ENCODE measurements at regions of chr3 and their contacts with region 1.

Region 1: DNA sequence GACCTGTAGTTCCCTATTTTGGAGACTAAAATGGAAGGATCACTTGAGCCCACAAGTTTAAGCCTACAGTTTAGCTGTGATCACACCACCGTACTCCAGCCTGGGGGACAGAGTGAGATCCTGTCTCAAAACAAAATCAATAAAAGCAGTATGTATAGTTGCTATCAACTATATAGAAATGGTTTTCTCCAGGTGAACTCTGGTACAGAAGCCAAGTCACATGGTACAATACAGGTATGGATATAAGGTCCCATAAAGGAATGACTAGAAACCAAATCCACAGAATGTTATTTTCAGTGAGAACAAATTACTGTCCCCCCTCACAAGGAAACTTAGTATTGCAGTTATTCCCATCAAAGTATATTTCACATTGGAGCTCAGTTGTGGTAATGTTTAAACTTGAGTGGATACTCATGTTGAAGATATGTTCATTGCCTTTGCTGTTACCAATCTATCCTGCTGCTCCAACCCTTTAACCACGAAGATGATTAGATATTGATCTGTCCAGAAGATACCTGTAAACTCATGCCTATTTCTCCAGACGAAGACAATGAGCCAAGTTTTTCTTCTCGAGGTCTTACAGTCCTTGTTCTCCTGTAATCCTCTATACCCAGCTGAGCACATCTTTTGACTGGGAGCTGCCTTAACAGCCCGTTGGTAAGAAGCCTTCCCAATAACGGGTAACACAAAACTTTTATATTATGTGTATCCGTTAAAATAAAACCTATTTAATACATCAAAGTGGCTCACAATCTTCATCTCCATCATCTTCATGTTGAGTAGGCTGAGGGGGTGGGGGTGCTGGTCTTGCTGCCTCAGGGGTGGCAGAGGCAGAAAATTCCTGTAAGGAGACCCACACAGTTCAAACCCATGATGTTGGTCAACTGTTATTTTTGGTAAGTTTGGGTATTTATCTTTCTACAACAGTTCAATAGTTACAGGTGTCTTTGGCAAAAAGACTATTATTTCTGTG is 24.6 kb downstream of the TRA2B start:
- DNase-seq: no peak
- ATAC-seq: no peak

Region 2: GRCh38 chr3:185733980-185734724 is 179.1 kb before region 1 on chr3:
- intact Hi-C with region 1: loop called in 1 of 2 experiments (anchors 10 kb)
- DNase-seq: no peak
- ATAC-seq: peak in 1 of 2 donors; percentile 85

Measured in left cardiac atrium (tissue), 4 donors.